K562 (cell line): ENCODE measurements at regions of chr15 and their contacts with region 1.

Region 1: GRCh38 chr15:101008158-101009139 is 89.3 kb downstream of the LRRK1 start:
- DNase-seq: peak; percentile 85 to 92 (median 88)
- ATAC-seq: peak; percentile 93
- H3K4me3 ChIP-seq: peak overlapping the region; percentile 63
- H3K27ac ChIP-seq: peak overlapping the region; percentile 79
- H3K4me1 ChIP-seq: peaks cover 14 to 25% of the 10 kb centered on the region in 2 experiments
- H3K27me3 ChIP-seq: peaks cover 5 to 18% of the 10 kb centered on the region in 2 experiments; a peak in 3 of 5 replicates
- CTCF ChIP-seq: peak; percentile 94 to 97 (median 95)
- EP300 ChIP-seq: no peak
- POLR2A ChIP-seq: peak; percentile 58; the same call in 1 of the 2 replicates
- RAD21 ChIP-seq: peak; percentile 17 to 47; a peak in 3 of 4 replicates

Region 2: DNA sequence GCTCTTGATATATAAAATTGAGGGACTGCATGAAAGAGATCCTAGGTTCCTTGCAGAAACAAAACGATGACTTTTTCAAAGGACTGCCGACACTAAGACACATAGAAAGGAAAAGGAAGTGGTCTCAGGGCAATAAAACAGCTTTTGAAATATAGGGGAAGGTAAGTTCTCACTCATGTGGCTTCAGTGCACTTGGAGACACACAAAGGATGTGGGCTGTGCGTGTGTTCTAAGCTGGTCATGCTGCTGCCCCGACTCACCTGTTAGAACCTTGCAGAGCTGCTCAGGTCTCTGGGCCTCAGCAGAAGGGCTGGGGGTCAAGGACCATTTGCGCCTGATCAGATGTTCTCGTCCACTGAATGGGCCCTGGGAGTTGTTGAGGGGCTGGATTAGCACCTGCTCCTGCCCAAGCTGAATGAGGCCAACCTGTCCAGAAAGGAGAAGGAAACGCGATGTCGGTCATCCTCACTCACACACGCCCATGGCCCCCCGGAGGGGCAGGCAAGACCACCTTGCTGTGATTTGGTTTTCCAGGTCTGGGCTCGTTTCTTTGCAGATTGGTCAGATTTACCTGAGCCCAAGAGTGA is 677.7 kb before region 1 on chr15:
- CTCF ChIA-PET with region 1: no interaction called
- POLR2A ChIA-PET with region 1: no interaction called
- in situ Hi-C with region 1: loop called (anchors 5 kb)
- intact Hi-C with region 1: no loop called
- DNase-seq: no peak
- ATAC-seq: no peak
- H3K4me3 ChIP-seq: no peak overlapping the region
- H3K27ac ChIP-seq: no peak overlapping the region
- H3K4me1 ChIP-seq: 0 out of 5 replicates have a peak, but pooled peaks cover 0 to 3% of the 10 kb centered on the region in 2 experiments
- H3K27me3 ChIP-seq: peaks cover 6 to 63% of the 10 kb centered on the region in 2 experiments; a peak in 4 of 5 replicates
- CTCF ChIP-seq: no peak
- EP300 ChIP-seq: no peak
- POLR2A ChIP-seq: no peak
- RAD21 ChIP-seq: no peak

Region 3: GRCh38 chr15:100627789-100628395 is 380.6 kb before region 1 on chr15:
- CTCF ChIA-PET with region 1: interaction called, 23 read pairs
- POLR2A ChIA-PET with region 1: no interaction called
- in situ Hi-C with region 1: no loop called
- intact Hi-C with region 1: loop called (anchors 2 kb)
- DNase-seq: peak; percentile 61 to 73 (median 68)
- ATAC-seq: peak; percentile 94
- H3K4me3 ChIP-seq: no peak overlapping the region
- H3K27ac ChIP-seq: no peak overlapping the region
- H3K4me1 ChIP-seq: no peaks in the 10 kb centered on the region; a peak in 1 of 5 replicates
- H3K27me3 ChIP-seq: no peaks in the 10 kb centered on the region
- CTCF ChIP-seq: peak; percentile 55 to 85 (median 78)
- EP300 ChIP-seq: no peak
- POLR2A ChIP-seq: no peak
- RAD21 ChIP-seq: peak; percentile 63 to 74

Region 4: GRCh38 chr15:100671858-100672543 is 336.4 kb before region 1 on chr15:
- CTCF ChIA-PET with region 1: interaction called, 3 read pairs
- POLR2A ChIA-PET with region 1: no interaction called
- in situ Hi-C with region 1: no loop called
- intact Hi-C with region 1: loop called (anchors 1 kb)
- DNase-seq: peak; percentile 28 to 63 (median 42)
- ATAC-seq: peak; percentile 98
- H3K4me3 ChIP-seq: no peak overlapping the region
- H3K27ac ChIP-seq: no peak overlapping the region
- H3K4me1 ChIP-seq: no peaks in the 10 kb centered on the region
- H3K27me3 ChIP-seq: peaks cover 28 to 40% of the 10 kb centered on the region in 2 experiments; a peak in 4 of 5 replicates
- CTCF ChIP-seq: peak; percentile 72 to 80 (median 75)
- EP300 ChIP-seq: no peak
- POLR2A ChIP-seq: no peak
- RAD21 ChIP-seq: peak; percentile 52 to 79

Region 5: DNA sequence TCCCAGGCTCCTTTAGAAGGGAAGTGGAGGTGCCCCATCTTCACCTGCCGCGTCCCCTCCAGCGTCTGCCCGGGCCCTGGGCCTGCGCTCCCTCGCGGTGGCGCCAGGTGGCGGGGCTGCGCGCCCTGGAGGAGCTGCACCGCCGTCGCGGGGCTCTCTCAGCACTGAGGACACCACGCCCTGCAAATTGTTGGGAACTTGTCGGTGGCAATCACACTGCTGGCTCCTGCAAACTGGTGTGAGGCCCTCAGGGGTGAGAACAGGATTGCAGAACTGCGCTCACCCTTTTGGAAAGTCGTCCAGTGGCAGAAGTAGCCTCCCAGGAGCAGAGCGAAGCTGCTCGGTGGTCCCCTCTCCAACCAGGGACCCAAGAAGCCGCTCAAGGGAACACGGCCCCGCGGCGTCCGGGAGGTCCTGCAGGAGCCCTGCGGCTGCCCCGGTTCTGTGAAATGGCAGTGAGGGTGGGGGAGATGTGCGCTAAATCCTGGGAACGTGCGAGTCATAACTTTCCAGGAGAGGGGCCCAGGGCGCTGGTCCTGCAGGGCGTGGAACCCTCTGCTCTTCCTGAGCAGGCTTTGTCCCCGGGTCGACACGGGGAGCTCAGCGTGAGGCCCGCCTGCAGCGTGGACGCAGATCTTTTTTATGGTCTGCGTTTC is 90.3 kb before region 1 on chr15:
- CTCF ChIA-PET with region 1: interaction called, 25 read pairs
- POLR2A ChIA-PET with region 1: no interaction called
- in situ Hi-C with region 1: no loop called
- intact Hi-C with region 1: loop called (anchors 1 kb)
- DNase-seq: peak; percentile 69 to 80 (median 76)
- ATAC-seq: peak; percentile 99
- H3K4me3 ChIP-seq: no peak overlapping the region
- H3K27ac ChIP-seq: no peak overlapping the region
- H3K4me1 ChIP-seq: peaks cover 0 to 20% of the 10 kb centered on the region in 2 experiments; a peak in 2 of 5 replicates
- H3K27me3 ChIP-seq: peaks cover 24 to 58% of the 10 kb centered on the region in 2 experiments
- CTCF ChIP-seq: peak; percentile 85 to 97 (median 85)
- EP300 ChIP-seq: no peak
- POLR2A ChIP-seq: no peak
- RAD21 ChIP-seq: peak; percentile 44 to 73; a peak in 3 of 4 replicates

Region 6: GRCh38 chr15:101135532-101136166 is 127.2 kb after region 1 on chr15:
- CTCF ChIA-PET with region 1: no interaction called
- POLR2A ChIA-PET with region 1: no interaction called
- in situ Hi-C with region 1: no loop called
- intact Hi-C with region 1: no loop called
- DNase-seq: no peak
- ATAC-seq: no peak
- H3K4me3 ChIP-seq: no peak overlapping the region
- H3K27ac ChIP-seq: no peak overlapping the region
- H3K4me1 ChIP-seq: peaks cover 17 to 32% of the 10 kb centered on the region in 2 experiments; a peak in 4 of 5 replicates
- H3K27me3 ChIP-seq: peaks cover 0 to 7% of the 10 kb centered on the region in 2 experiments; a peak in 3 of 5 replicates
- CTCF ChIP-seq: no peak
- EP300 ChIP-seq: no peak
- POLR2A ChIP-seq: no peak
- RAD21 ChIP-seq: no peak